Panc1 (cell line): ENCODE measurements at regions of chr11 and their contacts with region 1.

Region 1: DNA sequence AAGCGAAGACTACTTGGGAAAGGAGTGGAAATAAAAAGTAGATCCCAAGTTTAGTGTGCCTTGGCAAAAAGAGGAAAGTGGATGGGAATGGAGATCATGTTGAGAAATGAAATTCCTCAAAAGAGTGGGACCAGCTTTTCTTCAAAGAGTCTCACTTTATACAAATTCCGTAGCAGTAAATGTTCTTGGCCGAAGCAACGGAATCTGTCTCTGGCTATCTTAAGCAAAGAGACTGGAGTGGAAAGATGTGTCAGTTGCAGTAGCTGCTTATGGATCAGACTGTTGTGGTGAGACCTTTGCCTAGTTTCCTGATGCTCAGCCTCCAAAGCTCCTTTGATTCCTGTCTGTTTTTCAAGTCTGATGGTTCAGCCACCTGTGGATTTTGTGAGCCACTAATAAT is 73.6 kb downstream of the CSTPP1 start:
- DNase-seq: no peak
- ATAC-seq: no peak
- H3K4me3 ChIP-seq: no peak overlapping the region
- H3K27ac ChIP-seq: no peak overlapping the region
- H3K4me1 ChIP-seq: no peaks in the 10 kb centered on the region
- H3K27me3 ChIP-seq: no peaks in the 10 kb centered on the region
- CTCF ChIP-seq: no peak

Region 2: DNA sequence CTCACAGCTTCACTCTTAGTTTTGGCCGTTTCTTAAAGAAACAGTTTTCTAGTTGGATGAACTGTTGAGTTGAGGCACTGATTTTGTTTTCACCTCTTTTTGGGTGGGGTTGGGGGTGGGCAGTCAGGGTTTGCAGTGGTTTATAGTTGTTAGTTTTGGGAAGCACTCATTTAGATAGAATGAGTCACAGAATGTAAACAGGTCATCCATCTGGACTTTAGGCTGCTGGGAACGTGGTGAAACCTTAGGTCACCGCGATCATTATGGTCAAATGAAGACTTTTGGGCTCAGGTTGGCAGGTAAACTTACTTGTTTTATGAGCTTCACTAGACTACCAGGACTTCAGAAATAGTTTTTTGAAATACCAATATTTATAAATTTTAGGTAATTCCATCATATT is 25.2 kb before region 1 on chr11:
- CTCF ChIA-PET with region 1: no interaction called
- POLR2A ChIA-PET with region 1: interaction called, 12 read pairs
- in situ Hi-C with region 1: no loop called
- intact Hi-C with region 1: no loop called
- DNase-seq: no peak
- ATAC-seq: no peak
- H3K4me3 ChIP-seq: no peak overlapping the region
- H3K27ac ChIP-seq: no peak overlapping the region
- H3K4me1 ChIP-seq: peaks cover 7% of the 10 kb centered on the region; the same call in 1 of the 2 replicates
- H3K27me3 ChIP-seq: no peaks in the 10 kb centered on the region
- CTCF ChIP-seq: no peak

Region 3: GRCh38 chr11:47538741-47539574 is 528.8 kb after region 1 on chr11:
- CTCF ChIA-PET with region 1: no interaction called
- POLR2A ChIA-PET with region 1: no interaction called
- in situ Hi-C with region 1: no loop called
- intact Hi-C with region 1: no loop called
- DNase-seq: no peak
- ATAC-seq: no peak
- H3K4me3 ChIP-seq: no peak overlapping the region
- H3K27ac ChIP-seq: no peak overlapping the region
- H3K4me1 ChIP-seq: peaks cover 20% of the 10 kb centered on the region
- H3K27me3 ChIP-seq: no peaks in the 10 kb centered on the region
- CTCF ChIP-seq: no peak